HCT116 (cell line): ENCODE measurements at regions of chr11 and their contacts with region 1.

Region 1: GRCh38 chr11:104222464-104222863 is 58.5 kb upstream of the PDGFD start:
- DNase-seq: no peak
- ATAC-seq: no peak
- H3K4me3 ChIP-seq: no peak overlapping the region
- H3K27ac ChIP-seq: no peak overlapping the region
- H3K4me1 ChIP-seq: no peaks in the 10 kb centered on the region
- H3K27me3 ChIP-seq: no peaks in the 10 kb centered on the region
- CTCF ChIP-seq: no peak
- POLR2A ChIP-seq: no peak
- RAD21 ChIP-seq: 0 out of 2 replicates have a peak, but pooled peaks have one; percentile 12

Region 2: DNA sequence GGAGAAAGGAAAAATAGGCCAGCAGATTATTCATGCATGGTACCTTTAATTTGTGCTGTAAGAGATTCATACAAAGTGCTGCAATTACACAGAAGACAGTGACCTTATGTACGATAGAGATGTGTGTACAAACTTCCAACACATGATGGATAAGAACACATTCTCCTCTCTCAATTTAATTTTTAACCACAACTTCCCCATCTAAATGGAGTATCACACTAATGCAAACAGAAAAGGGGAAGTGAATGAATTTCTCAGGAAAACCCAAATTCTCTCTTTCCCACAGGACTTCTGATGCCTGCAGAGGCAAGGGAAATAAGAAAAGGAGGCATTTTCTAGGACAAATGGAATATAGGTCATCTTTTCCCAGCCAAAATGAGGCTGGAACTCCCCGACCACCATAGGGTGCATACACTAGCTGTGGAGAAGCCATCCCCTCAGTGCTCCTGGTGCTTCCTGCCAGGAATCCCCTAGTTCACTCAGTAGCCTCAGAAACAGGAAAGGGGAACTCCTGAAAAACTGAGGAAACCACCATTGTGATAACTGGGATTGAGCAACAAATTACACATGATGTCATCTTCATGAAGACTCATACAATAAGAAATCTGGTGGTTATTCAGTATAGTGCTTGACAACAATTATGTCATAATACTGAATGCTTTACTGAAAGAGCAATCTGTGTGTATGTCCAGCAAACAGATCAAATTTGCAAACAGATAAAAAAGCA is 1464.5 kb before region 1 on chr11:
- CTCF ChIA-PET with region 1: no interaction called
- POLR2A ChIA-PET with region 1: no interaction called
- RAD21 ChIA-PET with region 1: no interaction called
- intact Hi-C with region 1: loop called (anchors 5 kb)
- DNase-seq: no peak
- ATAC-seq: no peak
- H3K4me3 ChIP-seq: no peak overlapping the region
- H3K27ac ChIP-seq: no peak overlapping the region
- H3K4me1 ChIP-seq: peaks cover 0 to 3% of the 10 kb centered on the region in 2 experiments; a peak in 1 of 4 replicates
- H3K27me3 ChIP-seq: no peaks in the 10 kb centered on the region
- CTCF ChIP-seq: no peak
- POLR2A ChIP-seq: no peak
- RAD21 ChIP-seq: no peak